ENCODE measurements at regions of chr9 and their contacts with region 1.

Region 1: DNA sequence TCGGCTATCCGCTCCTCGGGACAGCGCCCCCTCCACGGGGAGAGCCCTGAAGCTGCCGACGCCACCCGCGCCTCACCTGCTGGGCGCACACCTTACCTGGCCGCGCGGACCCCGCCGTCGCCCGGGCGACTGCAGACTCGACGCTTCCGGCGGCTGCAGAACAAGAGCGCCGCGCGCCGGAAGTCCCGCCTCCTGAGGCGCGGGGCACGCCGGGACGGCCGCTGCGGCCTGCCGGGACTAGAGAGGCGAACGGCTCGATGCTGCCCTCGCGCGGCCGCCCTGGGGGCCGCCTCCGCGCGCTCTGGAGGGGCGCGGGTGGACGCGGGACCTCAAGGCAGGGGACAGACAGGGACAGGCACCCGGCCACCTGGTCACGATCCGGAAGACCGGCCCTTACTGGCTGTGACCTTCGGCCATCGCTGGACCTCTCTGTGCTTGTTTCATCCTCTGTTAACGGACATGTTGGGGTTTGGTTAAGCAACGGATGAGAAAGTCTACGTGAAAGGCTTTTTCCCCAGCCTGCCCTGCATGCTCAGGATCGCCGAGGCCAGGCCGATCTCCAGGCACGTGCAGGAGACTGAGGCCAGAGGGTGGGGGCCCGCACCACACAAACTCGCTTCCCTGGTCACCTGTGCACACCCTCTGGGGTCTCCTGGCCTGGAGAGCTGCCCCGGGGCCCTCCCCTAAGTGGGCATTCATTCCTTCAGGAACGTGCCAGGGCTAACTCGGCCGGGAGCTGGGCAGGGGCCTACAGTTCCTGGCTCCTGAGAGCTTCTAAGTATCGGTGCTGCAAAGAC is at the start of gene SNAPC4:
- DNase-seq: peak; percentile 40
- ATAC-seq: peak; percentile 74
- H3K4me3 ChIP-seq: peak within 1 kb of the TSS; percentile 96
- H3K27ac ChIP-seq: peak within 1 kb of the TSS; percentile 61
- H3K4me1 ChIP-seq: peaks cover 33% of the 10 kb centered on the region
- H3K27me3 ChIP-seq: no peaks in the 10 kb centered on the region
- CTCF ChIP-seq: peak; percentile 75 to 96 (median 89)
- EP300 ChIP-seq: no peak
- POLR2A ChIP-seq: peak; percentile 93
- RAD21 ChIP-seq: peak; percentile 62
- polyA plus RNA-seq, gene SNAPC4: 0.42 to 0.43 TPM

Region 2: DNA sequence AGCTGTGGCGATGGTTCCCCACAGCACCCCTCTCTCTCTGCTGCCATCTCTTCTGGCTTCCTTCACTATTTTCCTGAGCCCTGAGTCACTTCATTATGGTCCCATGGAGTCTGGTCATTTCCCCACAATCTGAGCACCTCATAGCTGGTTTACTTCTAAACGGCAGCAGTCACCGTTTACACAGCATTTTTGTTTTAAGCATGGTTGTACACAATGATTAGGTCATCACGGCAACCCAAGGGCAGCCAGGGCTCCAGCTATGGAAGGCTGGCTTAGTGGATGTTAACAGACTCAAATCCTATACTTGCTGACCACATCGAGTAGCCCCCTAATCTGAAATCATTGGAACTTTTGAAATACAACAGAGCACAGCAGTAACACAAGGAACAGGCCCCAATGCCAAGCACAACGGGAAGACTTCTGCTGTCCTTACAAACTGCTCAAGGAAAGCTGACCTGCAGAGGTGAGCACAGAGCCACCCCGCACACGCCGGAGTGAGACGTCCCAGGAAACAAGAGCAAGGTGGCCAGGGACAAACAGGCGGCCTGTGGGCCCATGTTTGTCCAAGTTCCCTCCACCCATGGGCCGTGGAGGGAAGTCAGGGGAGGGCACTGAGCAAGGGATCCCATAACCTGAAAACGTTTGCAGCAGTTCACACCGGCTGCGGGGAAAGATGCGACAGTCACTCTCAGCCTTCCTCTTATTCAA is 515.8 kb before region 1 on chr9:
- CTCF ChIA-PET with region 1: no interaction called
- POLR2A ChIA-PET with region 1: no interaction called
- RAD21 ChIA-PET with region 1: no interaction called
- SMC1A ChIA-PET with region 1: no interaction called
- in situ Hi-C with region 1: no loop called
- intact Hi-C with region 1: no loop called
- DNase-seq: no peak
- ATAC-seq: no peak
- H3K4me3 ChIP-seq: no peak overlapping the region
- H3K27ac ChIP-seq: no peak overlapping the region
- H3K4me1 ChIP-seq: peaks cover 20% of the 10 kb centered on the region
- H3K27me3 ChIP-seq: no peaks in the 10 kb centered on the region
- CTCF ChIP-seq: no peak
- EP300 ChIP-seq: no peak
- POLR2A ChIP-seq: no peak
- RAD21 ChIP-seq: no peak

Region 3: GRCh38 chr9:136339173-136339957 is 60.9 kb before region 1 on chr9:
- CTCF ChIA-PET with region 1: interaction called, 8 read pairs
- POLR2A ChIA-PET with region 1: no interaction called
- RAD21 ChIA-PET with region 1: interaction called, 4 read pairs
- SMC1A ChIA-PET with region 1: no interaction called
- in situ Hi-C with region 1: loop called (anchors 5 kb)
- intact Hi-C with region 1: loop called (anchors 1 kb)
- DNase-seq: no peak
- ATAC-seq: peak; percentile 93
- H3K4me3 ChIP-seq: no peak overlapping the region
- H3K27ac ChIP-seq: no peak overlapping the region
- H3K4me1 ChIP-seq: no peaks in the 10 kb centered on the region
- H3K27me3 ChIP-seq: no peaks in the 10 kb centered on the region
- CTCF ChIP-seq: peak; percentile 84 to 98 (median 97)
- EP300 ChIP-seq: no peak
- POLR2A ChIP-seq: no peak
- RAD21 ChIP-seq: peak; percentile 76

Region 4: GRCh38 chr9:136363606-136364370 is 36.4 kb before region 1 on chr9 and contains the start of gene DNLZ:
- CTCF ChIA-PET with region 1: interaction called, 10 read pairs
- POLR2A ChIA-PET with region 1: interaction called, 10 read pairs
- RAD21 ChIA-PET with region 1: interaction called, 8 read pairs
- SMC1A ChIA-PET with region 1: no interaction called
- in situ Hi-C with region 1: no loop called
- intact Hi-C with region 1: no loop called
- DNase-seq: peak; percentile 32
- ATAC-seq: peak; percentile 84
- H3K4me3 ChIP-seq: peak within 1 kb of the TSS; percentile 89
- H3K27ac ChIP-seq: peak within 1 kb of the TSS; percentile 90
- H3K4me1 ChIP-seq: peaks cover 10% of the 10 kb centered on the region
- H3K27me3 ChIP-seq: no peaks in the 10 kb centered on the region
- CTCF ChIP-seq: peak; percentile 90 to 98 (median 91)
- EP300 ChIP-seq: no peak
- POLR2A ChIP-seq: peak; percentile 81
- RAD21 ChIP-seq: peak; percentile 37; the same call in 1 of the 2 replicates
- polyA plus RNA-seq, gene DNLZ: 1.5 TPM in 1 of 2 experiments, not detected in the other

Region 5: DNA sequence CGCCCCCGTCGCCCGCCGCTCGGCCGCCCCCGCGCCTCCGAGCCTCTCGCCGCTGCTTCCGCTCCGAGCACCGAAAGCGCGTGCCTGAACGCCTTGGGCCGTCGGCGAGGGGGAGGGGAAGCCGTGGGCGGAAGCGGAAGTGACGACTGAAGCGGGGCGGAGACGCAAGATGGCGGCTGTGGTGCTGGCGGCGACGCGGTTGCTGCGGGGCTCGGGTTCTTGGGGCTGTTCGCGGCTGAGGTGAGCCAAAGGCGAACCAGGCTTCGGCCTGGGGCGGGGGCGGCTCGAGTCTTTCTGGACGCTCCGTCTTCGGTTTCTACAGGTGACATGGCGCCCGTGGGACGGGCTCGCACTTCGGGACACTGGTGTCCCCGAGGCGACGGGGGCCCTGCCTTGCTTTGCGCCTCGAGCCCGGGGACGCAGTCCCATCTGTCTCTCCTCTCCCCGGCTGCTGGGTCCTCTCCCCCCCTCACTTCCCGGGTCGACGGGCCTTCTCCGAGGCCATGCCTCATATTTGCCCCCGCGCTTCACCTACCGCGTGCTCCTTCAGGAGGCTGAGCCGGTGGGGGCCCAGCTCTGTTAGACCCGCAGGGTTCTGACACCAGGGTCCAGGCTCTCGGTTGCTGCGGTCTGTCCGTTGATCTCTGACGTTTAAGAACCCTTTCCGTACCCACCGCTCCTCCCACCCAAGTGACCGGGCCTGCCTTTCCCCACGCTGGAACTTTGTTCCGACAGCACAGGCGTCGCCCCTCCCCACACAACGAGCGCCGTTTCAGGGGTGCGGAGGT is 10.5 kb after region 1 on chr9 and contains the starts of genes ENTR1 and PMPCA:
- CTCF ChIA-PET with region 1: interaction called, 21 read pairs
- POLR2A ChIA-PET with region 1: interaction called, 11 read pairs
- RAD21 ChIA-PET with region 1: interaction called, 3 read pairs
- SMC1A ChIA-PET with region 1: interaction called, 4 read pairs
- in situ Hi-C with region 1: no loop called
- intact Hi-C with region 1: no loop called
- DNase-seq: peak; percentile 66
- ATAC-seq: peak; percentile 78
- H3K4me3 ChIP-seq: peak within 1 kb of the TSS; percentile 96
- H3K27ac ChIP-seq: peak within 1 kb of the TSS; percentile 93
- H3K4me1 ChIP-seq: peaks cover 16% of the 10 kb centered on the region
- H3K27me3 ChIP-seq: no peaks in the 10 kb centered on the region
- CTCF ChIP-seq: no peak
- EP300 ChIP-seq: no peak
- POLR2A ChIP-seq: peak; percentile 93
- RAD21 ChIP-seq: no peak
- polyA plus RNA-seq, gene ENTR1: 8.2 to 20.4 TPM
- polyA plus RNA-seq, gene PMPCA: 8.1 to 12.3 TPM

Region 6: DNA sequence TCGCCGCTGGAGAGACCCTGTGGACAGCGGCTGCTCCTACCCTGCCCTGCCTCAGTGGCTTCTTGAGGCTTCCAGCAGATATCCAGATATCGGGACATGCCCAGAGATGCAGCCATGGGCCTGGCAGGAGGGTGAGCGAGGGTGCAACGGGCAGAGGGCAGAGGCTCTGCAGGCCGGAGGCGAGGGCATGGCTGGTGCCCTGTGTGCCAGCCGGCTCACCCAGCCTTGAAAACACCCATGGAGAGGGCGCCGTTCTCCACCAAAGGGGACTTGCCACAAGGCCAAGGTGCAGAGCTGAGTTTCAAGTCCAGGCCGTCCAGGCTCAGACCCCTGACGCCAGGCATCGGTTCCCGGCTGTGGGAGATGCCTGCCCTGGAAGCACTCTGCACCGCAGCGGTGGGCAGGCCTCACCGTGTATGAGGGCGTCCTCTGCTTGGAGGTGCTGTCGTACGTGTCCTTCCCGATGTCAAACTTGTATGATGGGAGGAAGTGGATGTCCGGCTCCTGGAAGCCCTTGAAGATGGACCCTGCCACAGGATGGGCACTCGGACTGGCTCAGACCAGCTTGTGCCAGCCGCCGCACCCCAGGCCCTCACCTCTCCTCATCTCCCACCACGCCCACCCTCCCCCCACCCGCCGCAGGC is 30.5 kb after region 1 on chr9:
- CTCF ChIA-PET with region 1: no interaction called
- POLR2A ChIA-PET with region 1: no interaction called
- RAD21 ChIA-PET with region 1: no interaction called
- SMC1A ChIA-PET with region 1: no interaction called
- in situ Hi-C with region 1: no loop called
- intact Hi-C with region 1: no loop called
- DNase-seq: no peak
- ATAC-seq: no peak
- H3K4me3 ChIP-seq: no peak overlapping the region
- H3K27ac ChIP-seq: no peak overlapping the region
- H3K4me1 ChIP-seq: no peaks in the 10 kb centered on the region
- H3K27me3 ChIP-seq: no peaks in the 10 kb centered on the region
- CTCF ChIP-seq: no peak
- EP300 ChIP-seq: no peak
- POLR2A ChIP-seq: no peak
- RAD21 ChIP-seq: no peak